Endothelial cell of umbilical vein (primary cell): ENCODE measurements at regions of chr10 and their contacts with region 1.

Region 1: DNA sequence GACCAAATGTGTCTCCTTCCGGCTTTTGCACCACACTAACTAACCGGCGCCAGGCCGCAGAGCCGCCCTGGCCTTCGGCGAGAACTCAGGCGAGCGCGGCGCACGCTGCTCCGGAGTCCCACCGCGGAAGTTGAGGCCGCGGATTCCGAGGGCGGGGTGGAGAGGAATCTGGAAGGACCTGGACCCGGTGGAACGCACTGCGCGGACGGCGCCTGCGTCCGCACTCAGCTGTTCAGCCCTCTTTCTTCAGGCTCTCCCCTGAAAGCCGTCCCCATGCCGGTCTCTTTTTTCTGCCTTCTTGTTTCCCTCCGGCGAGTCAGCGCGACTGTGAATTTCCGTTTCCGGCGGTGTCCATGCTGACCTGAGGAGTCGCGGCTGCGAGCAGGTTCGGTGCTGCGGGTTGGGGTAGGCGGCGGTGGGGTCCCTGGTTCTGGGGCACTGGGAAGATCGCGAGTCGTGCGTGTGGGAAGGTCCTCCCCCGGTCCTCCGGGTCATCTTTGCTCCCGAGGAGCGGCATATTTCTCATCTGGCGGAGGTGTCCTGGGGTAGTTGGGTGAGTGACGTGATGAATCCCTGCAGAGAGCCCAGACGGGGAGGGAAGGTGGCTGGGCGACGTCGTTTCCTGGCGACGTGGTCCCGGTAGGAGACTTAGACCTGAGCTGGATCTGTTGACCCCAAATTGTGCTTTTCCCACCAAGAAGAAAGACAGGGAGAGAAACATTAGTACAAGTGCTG is at the start of gene BMS1:
- DNase-seq: peak; percentile 95
- H3K4me3 ChIP-seq: peak within 1 kb of the TSS; percentile 52 to 78 (median 68)
- H3K27ac ChIP-seq: peak within 1 kb of the TSS; percentile 87
- H3K4me1 ChIP-seq: peaks cover 11% of the 10 kb centered on the region
- H3K27me3 ChIP-seq: peaks cover 0 to 1% of the 10 kb centered on the region in 2 experiments
- CTCF ChIP-seq: no peak
- POLR2A ChIP-seq: peak; percentile 70
- total RNA-seq, gene BMS1: 22.4 and 23.4 TPM in 2 replicates

Region 2: GRCh38 chr10:42552493-42553407 is 229.9 kb before region 1 on chr10:
- CTCF ChIA-PET with region 1: no interaction called
- POLR2A ChIA-PET with region 1: no interaction called
- dilution Hi-C with region 1: no loop called
- intact Hi-C with region 1: loop called (anchors 1 kb)
- DNase-seq: peak; percentile 98
- H3K4me3 ChIP-seq: peak overlapping the region; percentile 67 to 71 (median 71)
- H3K27ac ChIP-seq: no peak overlapping the region
- H3K4me1 ChIP-seq: peaks cover 5% of the 10 kb centered on the region
- H3K27me3 ChIP-seq: no peaks in the 10 kb centered on the region
- CTCF ChIP-seq: no peak
- POLR2A ChIP-seq: peak; percentile 63

Region 3: DNA sequence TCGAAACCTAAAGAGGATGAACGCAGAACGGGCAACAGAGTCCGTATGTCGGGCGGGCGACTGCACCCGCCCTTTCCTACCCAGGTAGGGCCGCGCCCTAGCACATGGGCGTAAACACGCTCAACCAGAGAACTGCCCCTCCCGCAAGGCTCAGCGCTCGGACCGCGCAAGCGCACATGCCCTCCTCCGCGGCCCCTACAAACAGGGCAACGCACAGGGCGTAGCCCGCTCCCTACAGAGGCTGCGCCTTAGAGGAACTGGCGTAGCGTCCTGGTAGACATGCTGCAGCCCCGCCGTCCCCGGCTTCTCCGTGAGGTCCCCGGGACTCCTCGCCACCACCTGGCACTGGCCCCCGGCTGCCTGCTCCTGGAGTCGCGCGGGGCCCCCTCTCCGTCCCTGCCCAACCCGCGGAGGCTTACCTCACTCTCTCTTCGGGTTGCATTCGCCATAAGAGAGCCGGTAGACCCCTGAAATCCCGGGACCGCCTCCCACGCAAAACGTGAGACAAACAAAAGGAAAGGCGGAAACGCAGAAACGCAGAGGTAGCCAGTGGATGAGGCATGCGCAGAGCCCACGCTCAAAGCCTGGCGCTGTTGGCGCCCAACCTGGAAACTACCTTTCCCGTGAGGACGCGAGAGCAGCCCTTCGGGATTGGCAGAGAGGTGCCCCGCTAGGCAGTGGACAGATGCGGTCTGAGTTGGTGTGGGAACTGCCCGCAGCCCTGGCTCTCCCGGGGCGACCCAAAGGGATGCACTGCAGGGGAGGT is 144.4 kb before region 1 on chr10 and contains the start of gene ZNF33B:
- CTCF ChIA-PET with region 1: no interaction called
- POLR2A ChIA-PET with region 1: no interaction called
- dilution Hi-C with region 1: no loop called
- intact Hi-C with region 1: loop called (anchors 1 kb)
- DNase-seq: peak; percentile 95
- H3K4me3 ChIP-seq: peak within 1 kb of the TSS; percentile 42 to 82 (median 56)
- H3K27ac ChIP-seq: peak within 1 kb of the TSS; percentile 42
- H3K4me1 ChIP-seq: peaks cover 8% of the 10 kb centered on the region
- H3K27me3 ChIP-seq: peaks cover 0 to 2% of the 10 kb centered on the region in 2 experiments
- CTCF ChIP-seq: no peak
- POLR2A ChIP-seq: peak; percentile 79
- total RNA-seq, gene ZNF33B: 15.1 and 15.3 TPM in 2 replicates

Region 4: GRCh38 chr10:42859216-42859615 is 76.6 kb after region 1 on chr10:
- CTCF ChIA-PET with region 1: no interaction called
- POLR2A ChIA-PET with region 1: no interaction called
- dilution Hi-C with region 1: no loop called
- intact Hi-C with region 1: no loop called
- DNase-seq: no peak
- H3K4me3 ChIP-seq: no peak overlapping the region
- H3K27ac ChIP-seq: no peak overlapping the region
- H3K4me1 ChIP-seq: no peaks in the 10 kb centered on the region
- H3K27me3 ChIP-seq: peaks cover 3 to 13% of the 10 kb centered on the region in 2 experiments
- CTCF ChIP-seq: no peak
- POLR2A ChIP-seq: no peak

Region 5: DNA sequence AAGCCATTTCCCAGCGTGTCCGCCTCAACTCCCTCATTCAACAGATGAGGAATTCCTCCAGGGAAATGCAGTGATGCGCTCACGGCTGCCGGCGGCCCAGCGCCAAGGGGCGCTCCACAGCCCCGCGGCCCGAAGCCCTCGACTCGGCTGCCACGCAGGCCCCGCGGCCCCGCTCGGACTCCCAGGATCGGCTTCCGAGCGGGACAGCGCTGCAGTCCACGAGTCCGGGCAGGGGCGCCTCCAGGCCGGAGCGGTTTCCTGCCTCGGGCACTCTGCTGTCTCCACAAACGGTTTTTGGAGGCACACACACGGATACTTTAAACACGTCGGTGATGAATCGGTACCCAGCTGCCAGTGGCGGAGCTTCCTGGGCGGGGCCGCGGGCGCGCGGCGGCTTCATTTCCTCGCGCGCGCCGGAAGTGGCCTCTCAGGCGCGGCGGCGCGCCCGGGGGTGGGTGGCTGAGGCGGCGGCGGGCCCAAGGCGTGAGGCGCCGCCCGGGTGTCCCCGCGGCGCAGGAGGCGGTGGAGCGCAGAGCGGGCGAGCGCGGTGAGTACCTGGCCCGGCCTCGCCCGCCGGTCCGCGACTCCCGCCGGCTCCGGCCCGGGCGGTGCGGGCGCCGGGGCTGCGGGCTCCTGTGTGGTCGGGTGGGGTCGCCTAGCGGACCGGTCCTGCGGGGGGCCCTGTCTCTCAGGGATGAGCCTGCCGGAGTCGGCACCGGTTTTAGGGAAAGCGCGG is 355.6 kb after region 1 on chr10 and contains the start of gene CSGALNACT2:
- CTCF ChIA-PET with region 1: no interaction called
- POLR2A ChIA-PET with region 1: no interaction called
- dilution Hi-C with region 1: no loop called
- intact Hi-C with region 1: loop called (anchors 2 kb)
- DNase-seq: peak; percentile 76
- H3K4me3 ChIP-seq: peak within 1 kb of the TSS; percentile 75 to 98 (median 92)
- H3K27ac ChIP-seq: peak within 1 kb of the TSS; percentile 81
- H3K4me1 ChIP-seq: peaks cover 24% of the 10 kb centered on the region
- H3K27me3 ChIP-seq: peaks cover 2 to 6% of the 10 kb centered on the region in 2 experiments
- CTCF ChIP-seq: no peak
- POLR2A ChIP-seq: peak; percentile 80
- total RNA-seq, gene CSGALNACT2: 17.7 and 19.9 TPM in 2 replicates

Region 6: DNA sequence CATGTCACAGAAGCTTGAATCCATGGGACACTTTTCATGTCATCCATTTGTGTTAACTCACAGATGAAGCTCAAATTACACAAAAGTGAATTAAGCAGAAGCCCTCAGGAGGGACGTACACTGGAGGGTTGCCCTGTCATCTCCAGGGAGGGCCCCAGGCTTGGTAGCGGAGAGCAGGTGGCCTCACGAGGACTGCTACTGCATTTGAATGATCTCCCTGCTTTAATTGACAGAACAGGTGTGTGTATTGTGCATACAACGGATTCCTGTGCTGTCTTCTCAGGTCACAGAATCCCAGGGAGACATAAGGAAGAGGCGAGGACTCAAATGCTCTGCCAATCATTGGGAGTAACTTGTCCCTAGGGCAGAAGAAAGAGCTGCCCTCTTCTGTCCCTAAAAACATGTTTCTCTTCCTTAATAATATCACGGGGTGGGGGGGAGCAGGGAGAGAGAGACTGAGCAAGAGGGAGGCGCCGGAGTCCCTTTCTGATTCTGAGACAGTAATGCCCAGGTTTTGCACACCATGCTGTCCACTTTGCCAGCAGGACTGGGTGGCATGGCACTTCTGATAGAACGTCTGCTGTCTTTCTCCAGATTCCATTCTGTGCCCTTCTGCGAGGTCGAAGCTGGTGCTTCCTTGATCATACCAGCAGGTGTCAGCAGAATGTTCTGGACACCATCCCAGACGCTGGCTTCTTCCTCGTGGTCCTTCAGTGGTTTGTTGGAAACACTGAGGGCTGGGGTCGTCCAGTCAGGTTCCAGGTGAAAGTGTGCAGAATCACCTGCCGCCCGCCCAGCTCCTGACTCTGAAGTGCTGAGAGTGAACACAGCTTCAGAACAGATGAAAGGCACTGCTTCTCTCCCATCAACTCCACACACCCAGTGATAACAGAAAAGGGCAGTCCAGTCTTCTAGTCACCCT is 510.4 kb after region 1 on chr10:
- CTCF ChIA-PET with region 1: no interaction called
- POLR2A ChIA-PET with region 1: no interaction called
- dilution Hi-C with region 1: no loop called
- intact Hi-C with region 1: no loop called
- DNase-seq: peak; percentile 47
- H3K4me3 ChIP-seq: no peak overlapping the region
- H3K27ac ChIP-seq: no peak overlapping the region
- H3K4me1 ChIP-seq: peaks cover under 1% of the 10 kb centered on the region
- H3K27me3 ChIP-seq: peaks cover 0 to 4% of the 10 kb centered on the region in 2 experiments
- CTCF ChIP-seq: peak; percentile 59 to 65
- POLR2A ChIP-seq: no peak